ENCODE measurements at regions of chr11 and their contacts with region 1.

Region 1: DNA sequence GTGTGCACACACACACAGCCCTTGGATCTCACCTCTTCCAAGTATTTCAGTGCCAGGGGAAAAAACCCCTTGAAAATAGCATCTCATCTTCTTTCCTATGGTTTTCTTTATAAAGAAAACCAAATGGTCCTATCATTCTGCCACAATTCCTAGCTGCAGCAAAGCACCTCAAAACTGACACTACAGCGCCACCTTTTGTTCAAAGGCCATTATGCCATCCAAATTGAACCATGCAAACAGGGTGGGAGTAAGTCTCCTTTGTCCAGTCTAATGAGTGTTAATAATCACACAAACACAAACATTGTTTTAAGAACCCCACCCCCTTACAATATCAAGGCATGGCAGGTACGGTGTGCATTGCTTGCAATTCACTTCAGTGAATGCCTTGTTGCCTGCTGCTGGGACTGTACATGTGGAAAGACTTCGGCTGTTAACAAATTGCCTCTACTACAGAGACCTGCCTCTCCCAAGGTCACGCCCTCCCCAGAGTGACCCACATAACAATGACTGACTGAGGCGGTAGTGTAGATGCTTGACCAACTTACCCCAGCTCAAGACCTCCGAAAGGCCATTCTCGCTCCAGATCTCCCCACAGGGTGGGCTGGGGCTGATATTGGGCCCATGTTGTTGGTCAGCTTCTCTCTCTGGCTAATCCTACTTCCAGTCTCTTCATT is 31.7 kb downstream of the FAM181B start:
- DNase-seq: peak; percentile 19 to 29
- ATAC-seq: peak in 1 of 2 experiments; percentile 76; a peak in 3 of 6 replicates
- H3K4me3 ChIP-seq: no peak overlapping the region
- H3K27ac ChIP-seq: no peak overlapping the region
- H3K4me1 ChIP-seq: no peaks in the 10 kb centered on the region
- CTCF ChIP-seq: peak; percentile 44
- EP300 ChIP-seq: no peak
- POLR2A ChIP-seq: no peak
- RAD21 ChIP-seq: peak; percentile 26 to 47; a peak in 4 of 5 replicates

Region 2: GRCh38 chr11:81644239-81644840 is 1057.6 kb before region 1 on chr11:
- CTCF ChIA-PET with region 1: interaction called, 30 read pairs
- POLR2A ChIA-PET with region 1: no interaction called
- DNase-seq: peak; percentile 3 to 56
- ATAC-seq: peak; percentile 59 to 88; a peak in 3 of 6 replicates
- H3K4me3 ChIP-seq: no peak overlapping the region
- H3K27ac ChIP-seq: no peak overlapping the region
- H3K4me1 ChIP-seq: no peaks in the 10 kb centered on the region
- CTCF ChIP-seq: peak; percentile 54
- EP300 ChIP-seq: no peak
- POLR2A ChIP-seq: no peak
- RAD21 ChIP-seq: peak; percentile 48 to 65

Region 3: DNA sequence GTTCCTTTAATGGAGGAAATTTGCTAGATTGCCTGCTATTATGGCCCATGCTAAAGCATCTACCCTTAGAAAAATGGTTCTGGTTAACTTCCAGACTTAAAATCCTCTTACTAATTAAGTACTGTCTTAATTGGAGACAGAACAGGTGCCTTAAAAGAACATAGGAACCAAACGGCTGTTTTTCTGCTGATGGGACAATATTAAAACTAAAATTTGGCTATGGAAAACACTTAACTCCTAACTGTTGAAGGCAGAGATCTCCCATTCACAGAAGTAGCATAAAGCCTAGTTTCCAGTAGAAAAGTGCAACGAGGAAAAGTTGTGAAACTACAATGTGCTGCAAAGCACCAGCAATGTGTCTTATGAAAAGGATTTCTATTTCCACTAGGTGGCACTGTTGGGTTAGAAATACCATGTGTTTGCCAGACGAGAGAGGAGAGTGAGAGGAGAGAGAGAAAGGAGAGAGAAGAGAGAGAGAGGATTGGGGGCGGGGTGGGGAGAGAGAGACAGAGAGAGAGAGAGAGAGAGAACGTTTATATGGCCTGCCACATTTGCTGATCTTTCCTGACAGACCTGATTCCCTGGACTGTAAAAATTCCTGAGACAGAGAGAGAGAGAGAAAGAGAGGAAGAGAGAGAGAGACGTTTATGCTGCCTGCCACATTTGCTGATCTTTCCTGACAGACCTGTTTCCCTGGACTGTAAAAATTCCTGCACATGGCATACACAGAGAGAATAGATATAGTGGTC is 19.8 kb before region 1 on chr11:
- CTCF ChIA-PET with region 1: interaction called, 64 read pairs
- POLR2A ChIA-PET with region 1: no interaction called
- DNase-seq: peak; percentile 18 to 76
- ATAC-seq: peak; percentile 96 to 98
- H3K4me3 ChIP-seq: no peak overlapping the region
- H3K27ac ChIP-seq: no peak overlapping the region
- H3K4me1 ChIP-seq: no peaks in the 10 kb centered on the region
- CTCF ChIP-seq: peak; percentile 58
- EP300 ChIP-seq: no peak
- POLR2A ChIP-seq: no peak
- RAD21 ChIP-seq: peak; percentile 70 to 76

Region 4: DNA sequence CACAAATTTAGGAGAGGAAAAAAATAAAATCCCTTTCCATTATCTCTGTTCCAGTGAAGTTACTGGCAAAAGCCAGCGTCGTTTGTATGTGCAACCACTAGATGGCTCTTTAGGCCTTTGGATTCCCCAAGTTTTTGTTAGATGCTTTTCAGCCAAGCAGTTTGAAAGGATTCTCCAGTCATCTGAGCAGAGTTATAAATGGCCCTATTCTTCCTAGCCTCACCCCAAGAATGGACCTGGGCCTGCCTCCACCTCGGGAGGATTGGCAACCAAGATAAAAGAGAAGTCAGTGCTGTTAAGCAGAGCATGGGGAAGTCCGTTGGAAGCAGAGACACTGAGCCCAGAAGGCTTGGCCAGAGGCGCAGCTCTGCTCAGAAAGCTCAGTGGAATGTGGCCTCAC is 16.3 kb after region 1 on chr11:
- CTCF ChIA-PET with region 1: interaction called, 23 read pairs
- POLR2A ChIA-PET with region 1: no interaction called
- DNase-seq: peak; percentile 42 to 61
- ATAC-seq: peak; percentile 75 to 89
- H3K4me3 ChIP-seq: no peak overlapping the region
- H3K27ac ChIP-seq: no peak overlapping the region
- H3K4me1 ChIP-seq: no peaks in the 10 kb centered on the region
- CTCF ChIP-seq: peak; percentile 86
- EP300 ChIP-seq: no peak
- POLR2A ChIP-seq: no peak
- RAD21 ChIP-seq: peak; percentile 85 to 89

Region 5: DNA sequence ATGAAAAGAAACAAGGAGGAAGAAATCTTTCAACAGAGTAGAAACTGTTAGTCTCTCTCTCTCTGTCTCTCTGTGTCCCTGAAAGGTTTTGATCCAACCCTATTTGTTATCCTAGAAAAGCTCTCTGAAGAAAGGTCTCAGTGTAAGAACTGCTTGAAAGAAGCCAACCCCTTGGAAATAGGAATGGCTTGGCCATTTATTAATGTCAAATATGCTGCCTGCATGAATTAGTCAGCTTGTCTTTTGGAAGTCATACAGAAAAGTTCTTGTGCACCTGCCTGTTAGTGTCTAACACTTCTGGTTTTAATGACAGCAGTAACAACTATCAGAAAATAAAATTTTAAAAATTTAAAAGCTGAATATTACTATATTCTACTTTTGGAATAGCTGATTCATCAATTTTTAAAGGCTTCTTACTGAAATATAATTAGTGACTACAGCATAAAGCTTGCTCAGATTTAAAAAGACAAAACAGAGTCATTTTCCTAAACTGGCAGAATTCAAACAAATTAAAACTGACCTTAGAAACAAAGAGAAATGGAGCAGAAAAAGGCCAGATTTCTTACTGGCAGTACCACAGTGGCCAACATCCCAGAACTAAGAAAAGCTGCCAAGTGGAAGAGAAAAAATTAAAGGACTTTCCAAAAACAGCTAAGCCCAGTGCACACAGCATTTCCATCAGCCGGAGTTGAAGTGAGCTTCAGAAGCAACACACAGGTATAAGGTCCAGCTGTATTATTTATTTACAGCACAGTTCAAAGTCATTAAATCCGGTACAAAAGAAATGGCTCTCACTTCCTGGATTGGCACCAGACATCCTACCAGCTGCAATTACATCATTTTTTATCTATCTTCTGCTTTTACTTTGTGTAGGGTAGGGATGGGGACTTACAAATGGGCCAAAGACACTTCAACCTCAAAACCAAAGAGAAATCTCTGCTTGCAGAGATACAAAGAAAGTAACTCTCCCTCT is 121.9 kb after region 1 on chr11:
- CTCF ChIA-PET with region 1: no interaction called
- POLR2A ChIA-PET with region 1: no interaction called
- DNase-seq: no peak
- ATAC-seq: no peak
- H3K4me3 ChIP-seq: no peak overlapping the region
- H3K27ac ChIP-seq: no peak overlapping the region
- H3K4me1 ChIP-seq: no peaks in the 10 kb centered on the region
- CTCF ChIP-seq: no peak
- EP300 ChIP-seq: no peak
- POLR2A ChIP-seq: no peak
- RAD21 ChIP-seq: no peak